ENCODE measurements at regions of chr19 and their contacts with region 1.

Region 1: DNA sequence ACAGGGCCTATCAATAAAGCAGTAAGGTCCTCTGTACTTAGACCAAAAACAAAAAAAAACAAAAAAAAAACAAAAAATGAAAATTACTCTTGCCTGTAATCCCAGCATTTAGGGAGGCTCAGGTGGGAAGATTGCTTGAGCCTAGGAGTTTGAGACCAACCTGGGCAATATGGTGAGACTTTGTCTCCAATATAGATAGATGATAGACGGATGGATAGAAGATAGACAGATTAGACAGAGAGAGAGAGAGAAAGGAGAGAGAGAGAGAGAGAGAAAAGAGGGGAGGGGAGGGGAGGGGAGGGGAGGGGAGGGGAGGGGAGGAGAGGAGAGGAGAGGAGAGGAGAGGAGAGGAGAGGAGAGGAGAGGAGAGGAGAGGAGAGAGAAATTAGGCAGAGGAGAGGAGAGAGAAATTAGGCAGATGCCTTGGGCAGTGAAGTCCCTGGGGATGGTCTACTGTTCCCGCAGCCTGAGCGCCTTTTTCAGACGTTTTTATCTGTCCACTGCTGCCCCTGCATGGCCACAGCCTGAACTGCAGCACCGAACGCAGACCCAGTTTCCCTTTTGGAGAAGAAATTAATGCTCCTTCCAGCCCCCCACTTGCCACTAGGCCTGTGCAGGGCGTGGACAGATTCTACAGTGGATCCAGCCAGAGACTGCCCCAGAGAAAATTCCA is 9.8 kb upstream of the ZNF627 start:
- DNase-seq: peak; percentile 39
- H3K4me3 ChIP-seq: no peak overlapping the region
- H3K27ac ChIP-seq: no peak overlapping the region
- H3K4me1 ChIP-seq: peaks cover 3% of the 10 kb centered on the region
- H3K27me3 ChIP-seq: no peaks in the 10 kb centered on the region
- CTCF ChIP-seq: peak; percentile 87 to 93

Region 2: GRCh38 chr19:11496391-11497163 is 90.9 kb before region 1 on chr19:
- CTCF ChIA-PET with region 1: no interaction called
- dilution Hi-C with region 1: no loop called
- in situ Hi-C with region 1: loop called in 1 of 2 experiments (anchors 5 kb)
- intact Hi-C with region 1: loop called (anchors 1 kb)
- DNase-seq: peak; percentile 63
- H3K4me3 ChIP-seq: no peak overlapping the region
- H3K27ac ChIP-seq: no peak overlapping the region
- H3K4me1 ChIP-seq: no peaks in the 10 kb centered on the region
- H3K27me3 ChIP-seq: no peaks in the 10 kb centered on the region
- CTCF ChIP-seq: peak; percentile 69 to 78

Region 3: DNA sequence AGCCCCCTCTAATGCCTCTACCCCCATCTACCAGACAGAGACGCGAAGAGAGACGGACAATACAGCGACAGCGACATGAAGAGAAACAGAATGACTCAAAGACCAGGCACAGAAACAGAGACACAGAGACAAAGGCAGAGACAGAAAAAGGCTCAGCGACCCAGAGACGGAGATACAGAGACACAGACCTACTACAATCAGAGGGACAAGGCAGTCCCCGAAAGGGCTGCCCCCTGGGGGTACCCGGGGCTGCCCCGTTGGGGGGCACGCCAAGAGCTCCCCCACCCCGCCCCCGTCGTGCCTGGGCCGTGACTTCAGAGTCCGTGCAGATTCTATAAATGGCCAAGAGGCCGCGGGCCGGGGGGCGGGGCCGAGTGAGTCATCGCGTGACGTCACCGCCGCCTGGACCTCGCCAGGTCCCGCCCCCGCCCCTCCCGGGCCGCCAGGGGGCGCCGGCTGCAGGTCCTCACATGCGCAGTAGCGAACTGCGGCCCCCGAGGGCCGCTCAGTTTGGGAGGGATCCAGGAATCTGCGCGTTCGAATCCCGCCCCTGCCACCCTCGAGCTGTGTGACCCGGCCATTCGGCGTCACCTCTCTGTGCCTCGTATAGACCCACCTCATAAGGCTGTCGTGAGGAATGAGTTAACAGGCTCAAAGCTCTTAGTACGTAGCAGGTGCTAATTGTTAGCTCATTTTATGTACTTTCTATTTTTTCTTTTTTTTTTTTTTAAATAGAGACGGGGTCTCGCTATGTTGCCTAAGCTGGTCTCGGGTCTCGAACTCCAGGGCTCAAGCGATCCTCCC is 51.4 kb before region 1 on chr19:
- CTCF ChIA-PET with region 1: no interaction called
- dilution Hi-C with region 1: no loop called
- in situ Hi-C with region 1: no loop called
- intact Hi-C with region 1: loop called (anchors 1 kb)
- DNase-seq: peak; percentile 73
- H3K4me3 ChIP-seq: peak overlapping the region in 2 of 3 experiments; percentile 23 to 24
- H3K27ac ChIP-seq: peak overlapping the region; percentile 38
- H3K4me1 ChIP-seq: peaks cover 19% of the 10 kb centered on the region
- H3K27me3 ChIP-seq: no peaks in the 10 kb centered on the region
- CTCF ChIP-seq: peak; percentile 51 to 89

Region 4: GRCh38 chr19:11649941-11650340 is 62.5 kb after region 1 on chr19:
- CTCF ChIA-PET with region 1: no interaction called
- dilution Hi-C with region 1: no loop called
- in situ Hi-C with region 1: no loop called
- intact Hi-C with region 1: no loop called
- DNase-seq: no peak
- H3K4me3 ChIP-seq: no peak overlapping the region
- H3K27ac ChIP-seq: no peak overlapping the region
- H3K4me1 ChIP-seq: no peaks in the 10 kb centered on the region
- H3K27me3 ChIP-seq: no peaks in the 10 kb centered on the region
- CTCF ChIP-seq: no peak

Measured in mammary epithelial cell (primary cell).